Mammary epithelial cell (primary cell): ENCODE measurements at regions of chr1 and their contacts with region 1.

Region 1: DNA sequence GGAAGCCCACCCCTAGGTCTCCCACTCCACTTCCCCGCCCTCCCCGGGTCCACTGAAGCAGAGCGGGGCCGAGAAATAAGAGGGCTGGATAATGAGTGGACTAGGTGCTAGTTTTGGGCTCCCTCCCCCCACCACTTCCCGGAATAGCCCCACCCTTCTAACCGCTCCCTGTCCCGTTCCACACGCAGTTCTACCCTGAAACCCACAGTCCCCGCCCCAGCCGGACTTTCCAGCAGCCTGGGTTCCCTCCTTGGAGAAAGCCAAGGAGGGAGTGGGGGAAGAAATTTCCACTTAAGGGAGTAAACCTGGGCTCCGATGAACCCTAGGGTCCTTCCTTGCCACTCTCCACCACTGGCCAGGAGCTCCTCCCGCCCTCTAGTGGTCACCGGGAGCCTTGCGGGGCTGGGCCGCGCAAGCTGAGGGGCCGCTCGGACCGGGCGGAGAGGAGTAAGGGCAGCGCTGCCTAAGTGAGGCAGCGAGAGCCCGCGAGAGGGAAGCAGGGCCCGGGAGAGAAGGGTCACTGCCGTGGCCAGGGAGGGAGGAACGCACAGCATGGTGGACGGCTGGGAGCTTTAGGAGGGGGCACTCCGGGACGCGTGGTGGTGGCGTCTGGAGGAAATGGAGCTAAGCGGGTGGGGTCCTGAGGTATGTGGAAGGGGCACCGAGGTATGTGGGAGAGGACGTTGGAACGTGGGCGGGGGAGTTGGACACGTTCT is 14.3 kb downstream of the THBS3 start:
- DNase-seq: peak; percentile 89
- H3K4me3 ChIP-seq: peak overlapping the region; percentile 20 to 52 (median 30)
- H3K27ac ChIP-seq: peak overlapping the region; percentile 66
- H3K4me1 ChIP-seq: peaks cover 25% of the 10 kb centered on the region
- H3K27me3 ChIP-seq: no peaks in the 10 kb centered on the region
- CTCF ChIP-seq: peak; percentile 84 to 97

Region 2: GRCh38 chr1:155117617-155118016 is 75.8 kb before region 1 on chr1:
- CTCF ChIA-PET with region 1: interaction called, 11 read pairs
- dilution Hi-C with region 1: no loop called
- in situ Hi-C with region 1: no loop called
- intact Hi-C with region 1: no loop called
- DNase-seq: no peak
- H3K4me3 ChIP-seq: no peak overlapping the region
- H3K27ac ChIP-seq: no peak overlapping the region
- H3K4me1 ChIP-seq: peaks cover 4% of the 10 kb centered on the region
- H3K27me3 ChIP-seq: no peaks in the 10 kb centered on the region
- CTCF ChIP-seq: no peak